Natural killer cell (primary cell): ENCODE measurements at regions of chr2 and their contacts with region 1.

Region 1: GRCh38 chr2:24084386-24085361 is at the start of gene TP53I3:
- DNase-seq: peak; percentile 86 to 90
- ATAC-seq: peak; percentile 92 to 97 (median 92)
- H3K4me3 ChIP-seq: peak within 1 kb of the TSS; percentile 46
- H3K4me3 Mint-ChIP-seq: peak within 1 kb of the TSS; percentile 87
- H3K27ac ChIP-seq: peak within 1 kb of the TSS; percentile 50
- H3K27ac Mint-ChIP-seq: peak within 1 kb of the TSS; percentile 59 to 86
- H3K4me1 ChIP-seq: peaks cover 19% of the 10 kb centered on the region
- H3K4me1 Mint-ChIP-seq: peaks cover 5 to 29% of the 10 kb centered on the region in 2 donors
- H3K27me3 ChIP-seq: no peaks in the 10 kb centered on the region
- H3K27me3 Mint-ChIP-seq: no peaks in the 10 kb centered on the region
- CTCF ChIP-seq: peak; percentile 92
- total RNA-seq, gene TP53I3: 1.6 to 2.6 (median 2.0) TPM

Region 2: GRCh38 chr2:23199115-23199918 is 885.4 kb before region 1 on chr2:
- intact Hi-C with region 1: no loop called
- DNase-seq: peak in 1 of 2 donors; percentile 9
- ATAC-seq: no peak
- H3K4me3 ChIP-seq: no peak overlapping the region
- H3K4me3 Mint-ChIP-seq: no peak overlapping the region
- H3K27ac ChIP-seq: no peak overlapping the region
- H3K27ac Mint-ChIP-seq: no peak overlapping the region
- H3K4me1 ChIP-seq: no peaks in the 10 kb centered on the region
- H3K4me1 Mint-ChIP-seq: no peaks in the 10 kb centered on the region
- H3K27me3 ChIP-seq: no peaks in the 10 kb centered on the region
- H3K27me3 Mint-ChIP-seq: peaks cover 0 to 3% of the 10 kb centered on the region in 2 donors
- CTCF ChIP-seq: no peak

Region 3: GRCh38 chr2:23824777-23825212 is 259.9 kb before region 1 on chr2:
- intact Hi-C with region 1: loop called (anchors 1 kb)
- DNase-seq: peak in 1 of 2 donors; percentile 75
- ATAC-seq: peak; percentile 70 to 81 (median 71)
- H3K4me3 ChIP-seq: no peak overlapping the region
- H3K4me3 Mint-ChIP-seq: no peak overlapping the region
- H3K27ac ChIP-seq: no peak overlapping the region
- H3K27ac Mint-ChIP-seq: peak overlapping the region in 1 of 2 donors; percentile 11
- H3K4me1 ChIP-seq: no peaks in the 10 kb centered on the region
- H3K4me1 Mint-ChIP-seq: no peaks in the 10 kb centered on the region
- H3K27me3 ChIP-seq: no peaks in the 10 kb centered on the region
- H3K27me3 Mint-ChIP-seq: no peaks in the 10 kb centered on the region
- CTCF ChIP-seq: peak; percentile 81

Region 4: DNA sequence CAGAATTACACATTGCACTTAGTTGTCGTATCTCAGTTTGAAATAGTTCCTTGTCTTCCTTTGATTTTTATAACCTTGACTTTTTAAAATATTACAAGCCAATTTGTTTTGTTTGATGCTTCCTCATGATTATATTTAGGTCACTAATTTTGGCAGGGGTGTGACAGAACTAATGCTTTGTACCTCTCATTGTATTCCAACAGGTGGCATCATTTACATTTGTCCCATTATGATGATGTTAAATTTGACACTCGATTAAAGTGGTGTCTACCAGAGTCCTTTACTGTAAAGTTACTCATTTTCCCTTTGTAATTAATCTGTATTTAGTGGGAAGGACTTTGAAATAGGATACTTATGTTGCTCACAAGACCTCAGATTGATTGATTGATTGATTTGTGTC is 96.3 kb before region 1 on chr2:
- intact Hi-C with region 1: loop called (anchors 1 kb)
- DNase-seq: peak in 1 of 2 donors; percentile 48
- ATAC-seq: peak in 2 of 3 donors; percentile 49 to 58
- H3K4me3 ChIP-seq: no peak overlapping the region
- H3K4me3 Mint-ChIP-seq: no peak overlapping the region
- H3K27ac ChIP-seq: no peak overlapping the region
- H3K27ac Mint-ChIP-seq: no peak overlapping the region
- H3K4me1 ChIP-seq: no peaks in the 10 kb centered on the region
- H3K4me1 Mint-ChIP-seq: no peaks in the 10 kb centered on the region
- H3K27me3 ChIP-seq: no peaks in the 10 kb centered on the region
- H3K27me3 Mint-ChIP-seq: no peaks in the 10 kb centered on the region
- CTCF ChIP-seq: no peak